ENCODE measurements at regions of chr4 and their contacts with region 1.

Region 1: DNA sequence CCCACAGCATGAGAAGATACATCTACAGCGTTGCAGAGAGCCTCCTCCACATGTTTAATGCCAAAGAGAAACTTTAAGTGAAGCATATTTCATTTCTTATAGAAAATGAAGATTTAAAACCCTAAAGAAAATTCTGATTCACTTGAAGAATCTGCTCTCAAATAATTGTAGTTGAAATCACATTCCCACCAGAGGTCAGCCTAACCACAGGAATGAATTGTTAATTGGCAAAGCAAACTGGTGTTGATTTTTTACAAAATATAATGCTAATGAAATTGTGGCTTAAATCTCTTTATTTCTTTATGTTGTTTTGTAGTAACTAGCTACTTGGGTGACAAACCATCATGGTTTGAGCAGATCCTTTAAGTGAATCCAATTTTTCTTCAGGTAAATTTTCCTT is 31.1 kb upstream of the WDR17 start:
- DNase-seq: peak; percentile 28
- ATAC-seq: no peak
- H3K4me3 ChIP-seq: no peak overlapping the region
- H3K27ac ChIP-seq: no peak overlapping the region
- H3K4me1 ChIP-seq: no peaks in the 10 kb centered on the region
- H3K27me3 ChIP-seq: no peaks in the 10 kb centered on the region
- CTCF ChIP-seq: peak; percentile 23; the same call in 1 of the 2 replicates

Region 2: DNA sequence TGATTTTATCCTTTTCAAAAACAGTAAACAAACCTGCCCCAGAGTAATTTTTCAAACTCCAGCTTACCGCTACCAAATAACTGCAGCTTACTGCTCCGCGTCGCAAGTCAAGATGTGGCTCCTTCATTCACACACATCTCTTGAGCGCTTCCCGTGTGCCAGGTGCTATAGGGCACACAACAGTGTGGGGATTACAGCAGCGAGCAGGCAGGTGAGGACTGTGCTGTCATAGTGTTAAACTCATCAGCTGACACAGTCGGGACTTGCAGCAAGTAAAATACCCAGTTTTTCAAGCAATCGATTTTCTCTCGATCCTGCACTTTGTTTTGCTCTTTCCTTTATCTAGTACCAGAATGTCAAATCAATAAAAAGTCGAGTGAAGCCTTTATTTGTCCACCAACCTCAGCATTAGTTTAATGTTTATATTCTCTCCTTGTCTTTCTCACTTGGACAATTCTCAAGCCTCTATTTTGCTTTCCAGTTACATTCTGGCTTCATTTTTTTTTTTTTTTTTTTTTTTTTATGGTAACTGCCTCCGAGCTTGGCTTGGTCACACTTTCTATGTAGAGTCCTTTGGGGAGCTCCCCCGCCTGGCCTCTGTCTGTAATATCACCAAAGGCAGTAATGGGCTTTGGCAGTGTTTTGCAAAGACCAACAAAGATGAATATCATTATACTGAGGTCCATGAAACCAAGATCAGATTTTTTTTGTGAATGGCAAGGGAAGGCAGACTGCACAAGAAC is 242.8 kb after region 1 on chr4:
- CTCF ChIA-PET with region 1: no interaction called
- POLR2A ChIA-PET with region 1: no interaction called
- in situ Hi-C with region 1: no loop called
- intact Hi-C with region 1: loop called (anchors 5 kb)
- DNase-seq: no peak
- ATAC-seq: peak; percentile 93
- H3K4me3 ChIP-seq: peak overlapping the region; percentile 12 to 59
- H3K27ac ChIP-seq: no peak overlapping the region
- H3K4me1 ChIP-seq: no peaks in the 10 kb centered on the region
- H3K27me3 ChIP-seq: no peaks in the 10 kb centered on the region
- CTCF ChIP-seq: peak; percentile 74

Measured in Panc1 (cell line).